ENCODE measurements at regions of chr16 and their contacts with region 1.

Region 1: GRCh38 chr16:67816240-67817031 is 9.7 kb downstream of the TSNAXIP1 start:
- DNase-seq: peak; percentile 91
- H3K4me3 Mint-ChIP-seq: no peak overlapping the region
- H3K27ac Mint-ChIP-seq: no peak overlapping the region
- H3K4me1 Mint-ChIP-seq: peaks cover 6% of the 10 kb centered on the region
- H3K27me3 Mint-ChIP-seq: peaks cover 4% of the 10 kb centered on the region

Region 2: GRCh38 chr16:67521095-67521804 is 295.2 kb before region 1 on chr16:
- CTCF ChIA-PET with region 1: interaction called, 16 read pairs
- POLR2A ChIA-PET with region 1: no interaction called
- DNase-seq: peak; percentile 98
- H3K4me3 Mint-ChIP-seq: peak overlapping the region; percentile 81
- H3K27ac Mint-ChIP-seq: peak overlapping the region; percentile 97
- H3K4me1 Mint-ChIP-seq: peaks cover 34% of the 10 kb centered on the region
- H3K27me3 Mint-ChIP-seq: peaks cover 14% of the 10 kb centered on the region

Region 3: DNA sequence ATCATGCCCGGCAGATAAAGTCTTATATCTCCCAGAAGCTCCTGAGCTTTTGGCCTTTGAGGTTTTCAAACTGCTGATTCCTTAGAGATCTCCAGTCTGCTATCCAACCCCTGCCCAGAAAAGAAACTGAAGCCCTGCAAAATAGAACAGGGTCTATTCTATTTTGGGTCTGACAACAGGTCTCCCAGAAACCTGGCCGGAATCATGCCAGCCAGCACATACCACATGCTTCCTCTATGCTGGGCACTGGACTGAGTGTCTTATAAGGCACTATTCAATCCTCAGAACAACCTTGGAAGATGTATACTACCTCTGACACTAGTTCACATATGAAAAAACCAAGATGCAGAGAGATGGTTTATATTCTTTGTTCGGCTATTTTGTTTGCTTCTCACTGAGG is 76.0 kb before region 1 on chr16:
- CTCF ChIA-PET with region 1: interaction called, 10 read pairs
- POLR2A ChIA-PET with region 1: interaction called, 3 read pairs
- DNase-seq: no peak
- H3K4me3 Mint-ChIP-seq: no peak overlapping the region
- H3K27ac Mint-ChIP-seq: no peak overlapping the region
- H3K4me1 Mint-ChIP-seq: no peaks in the 10 kb centered on the region
- H3K27me3 Mint-ChIP-seq: no peaks in the 10 kb centered on the region

Region 4: DNA sequence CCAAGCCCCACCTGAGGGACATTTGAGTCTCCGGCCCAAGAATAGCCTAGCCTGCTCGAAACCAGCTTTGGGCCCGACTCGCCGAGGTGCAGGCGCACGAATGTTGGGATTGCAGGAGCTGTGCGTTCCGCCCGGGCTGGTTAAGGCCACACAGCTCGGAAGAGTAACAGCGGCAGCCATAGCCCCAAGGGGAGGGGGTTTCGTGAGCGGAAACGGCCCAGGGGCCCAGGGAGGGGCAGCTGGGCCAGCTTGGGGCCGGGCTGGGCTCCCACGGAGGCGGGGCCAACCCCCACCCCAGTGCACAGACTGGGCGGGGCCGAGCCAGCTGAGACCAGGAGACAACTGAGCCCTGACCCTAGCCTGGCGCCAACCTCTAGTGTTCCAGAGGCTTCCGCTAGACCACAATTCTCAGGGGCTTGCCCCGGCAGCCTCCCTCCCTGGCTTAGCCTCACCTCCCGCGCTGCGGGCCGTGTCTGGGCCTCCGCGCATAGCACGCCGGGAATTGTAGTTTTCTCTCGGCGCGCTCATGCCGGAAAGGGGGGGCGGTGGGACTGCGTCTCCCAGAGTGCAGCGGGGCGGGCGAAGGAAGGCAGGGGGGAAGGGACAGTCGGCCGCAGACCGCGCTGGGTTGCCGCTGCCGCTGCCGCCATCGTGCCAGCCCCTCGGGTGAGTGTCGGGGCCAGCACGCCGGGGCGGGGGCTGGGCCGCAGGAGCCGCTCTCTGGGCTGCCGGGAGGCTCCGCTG is 30.1 kb after region 1 on chr16 and contains the start of gene NUTF2:
- CTCF ChIA-PET with region 1: interaction called, 21 read pairs
- POLR2A ChIA-PET with region 1: interaction called, 5 read pairs
- DNase-seq: peak; percentile 97
- H3K4me3 Mint-ChIP-seq: peak within 1 kb of the TSS; percentile 89
- H3K27ac Mint-ChIP-seq: peak within 1 kb of the TSS; percentile 79
- H3K4me1 Mint-ChIP-seq: peaks cover 52% of the 10 kb centered on the region
- H3K27me3 Mint-ChIP-seq: no peaks in the 10 kb centered on the region
- total RNA-seq, gene NUTF2: 96.4 to 101 TPM

Region 5: GRCh38 chr16:67917852-67918236 is 101.4 kb after region 1 on chr16:
- CTCF ChIA-PET with region 1: interaction called, 23 read pairs
- POLR2A ChIA-PET with region 1: no interaction called
- DNase-seq: peak; percentile 47
- H3K4me3 Mint-ChIP-seq: no peak overlapping the region
- H3K27ac Mint-ChIP-seq: peak overlapping the region; percentile 61
- H3K4me1 Mint-ChIP-seq: peaks cover 26% of the 10 kb centered on the region
- H3K27me3 Mint-ChIP-seq: no peaks in the 10 kb centered on the region

Region 6: DNA sequence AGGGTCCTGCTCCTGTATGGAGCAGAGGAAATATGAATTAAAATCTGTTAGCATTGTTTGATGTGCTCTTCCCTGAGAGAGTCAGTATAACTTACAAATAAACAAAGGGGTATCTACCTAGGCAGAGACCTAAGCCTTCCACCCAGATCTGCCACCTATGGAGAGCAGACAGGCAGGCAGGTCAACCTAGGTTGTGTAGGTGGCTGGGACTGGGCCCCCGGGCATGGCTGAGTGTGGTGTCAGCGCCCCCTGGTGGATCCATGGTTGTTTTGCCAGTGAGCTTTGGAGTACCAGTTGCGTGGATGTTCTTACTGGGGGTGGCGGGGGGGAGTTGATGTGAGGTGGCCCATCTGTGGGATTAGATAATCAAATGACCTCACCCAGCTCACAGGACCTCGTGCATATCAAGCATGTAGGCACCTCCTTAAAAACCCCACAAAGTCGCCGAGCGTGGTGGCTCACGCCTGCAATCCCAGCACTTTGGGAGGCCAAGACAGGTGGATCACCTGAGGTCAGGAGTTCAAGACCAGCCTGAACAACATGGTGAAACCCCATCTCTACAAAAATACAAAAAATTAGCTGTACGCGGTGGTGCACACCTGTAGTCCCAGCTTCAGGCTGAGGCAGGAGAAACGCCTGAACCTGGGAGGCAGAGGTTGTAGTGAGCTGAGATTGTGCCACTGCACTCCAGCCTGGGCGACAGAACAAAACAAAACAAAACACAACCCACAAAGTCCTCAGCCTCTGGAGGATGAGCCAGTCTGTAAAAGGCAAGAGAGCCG is 224.3 kb after region 1 on chr16:
- CTCF ChIA-PET with region 1: interaction called, 11 read pairs
- POLR2A ChIA-PET with region 1: no interaction called
- DNase-seq: peak; percentile 91
- H3K4me3 Mint-ChIP-seq: no peak overlapping the region
- H3K27ac Mint-ChIP-seq: peak overlapping the region; percentile 74
- H3K4me1 Mint-ChIP-seq: peaks cover 29% of the 10 kb centered on the region
- H3K27me3 Mint-ChIP-seq: no peaks in the 10 kb centered on the region